Activated T-helper 2 cell treated with anti-CD3 and anti-CD28 coated beads, Interferon-gamma antibody, Interleukin-2, Interleukin-4, amounts not matched to agents 10 μg/mL and 5 μg/mL and 100 μg/mL, durations not matched to agents 14 hours and 24 hours and 36 hours (primary cell): ENCODE measurements at regions of chr15 and their contacts with region 1.

Region 1: GRCh38 chr15:40873625-40874561 is at the start of gene RHOV:
- DNase-seq: peak; percentile 54
- H3K4me3 Mint-ChIP-seq: peak within 1 kb of the TSS; percentile 84
- H3K27ac Mint-ChIP-seq: no peak within 1 kb of the TSS
- H3K4me1 Mint-ChIP-seq: peaks cover 22% of the 10 kb centered on the region
- H3K27me3 Mint-ChIP-seq: peaks cover 11% of the 10 kb centered on the region
- total RNA-seq, gene RHOV: 0.80 and 0.82 TPM in 2 replicates

Region 2: DNA sequence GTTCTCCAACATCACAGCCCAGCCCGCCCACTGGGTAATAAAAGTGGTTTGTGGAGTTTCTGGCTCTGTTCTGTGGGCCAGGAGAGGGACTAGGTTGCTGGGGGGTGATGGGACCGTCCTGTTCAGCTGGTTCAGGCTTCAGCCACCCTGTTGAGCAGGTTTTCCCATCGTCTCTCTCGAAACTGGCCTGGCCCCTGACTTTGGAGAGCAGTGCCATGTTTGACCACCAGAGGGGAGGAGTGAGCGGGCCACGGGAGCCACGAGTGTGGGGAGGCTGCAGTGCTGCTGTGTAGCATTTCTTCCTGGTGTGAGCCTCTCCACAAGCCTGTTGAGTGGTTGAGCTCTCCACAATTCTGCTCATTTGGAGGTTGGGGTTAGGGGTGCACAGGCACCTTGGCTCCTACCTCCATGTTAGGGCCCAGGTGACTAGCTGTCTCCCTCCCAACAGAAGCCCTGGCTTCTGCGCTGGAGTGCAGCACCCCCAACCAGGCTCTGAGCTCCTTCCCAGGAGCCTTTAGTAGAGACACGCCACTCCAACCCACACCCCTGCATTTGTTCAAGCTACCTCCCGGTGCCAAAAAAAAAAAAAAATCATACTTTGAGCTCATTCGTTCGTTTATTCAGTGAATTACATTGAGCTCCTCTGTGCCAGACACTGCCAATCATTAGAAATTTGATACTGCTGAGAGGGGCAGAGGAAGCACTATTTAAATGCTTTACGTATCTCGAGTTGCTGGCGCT is 16.1 kb before region 1 on chr15:
- intact Hi-C with region 1: loop called (anchors 2 kb)
- DNase-seq: peak; percentile 77
- H3K4me3 Mint-ChIP-seq: no peak overlapping the region
- H3K27ac Mint-ChIP-seq: no peak overlapping the region
- H3K4me1 Mint-ChIP-seq: peaks cover 12% of the 10 kb centered on the region
- H3K27me3 Mint-ChIP-seq: no peaks in the 10 kb centered on the region